AG04449 (cell line): ENCODE measurements at regions of chr3 and their contacts with region 1.

Region 1: GRCh38 chr3:44184319-44184953 is 57.2 kb upstream of the TOPAZ1 start:
- DNase-seq: no peak
- H3K4me3 ChIP-seq: no peak overlapping the region
- CTCF ChIP-seq: no peak

Region 2: GRCh38 chr3:44198284-44199269 is 14.1 kb after region 1 on chr3:
- CTCF ChIA-PET with region 1: interaction called, 26 read pairs
- POLR2A ChIA-PET with region 1: no interaction called
- DNase-seq: peak; percentile 12
- H3K4me3 ChIP-seq: no peak overlapping the region
- CTCF ChIP-seq: peak; percentile 83